CD14-positive monocyte (primary cell): ENCODE measurements at regions of chr9 and their contacts with region 1.

Region 1: GRCh38 chr9:114004221-114004716 is 73.8 kb downstream of the AMBP start:
- DNase-seq: peak in 2 of 3 donors; percentile 3 to 26
- H3K4me3 ChIP-seq: peak overlapping the region in 1 of 3 experiments; percentile 14
- H3K4me3 Mint-ChIP-seq: peak overlapping the region; percentile 35 to 85
- H3K27ac ChIP-seq: no peak overlapping the region
- H3K27ac Mint-ChIP-seq: peak overlapping the region in 4 of 7 donors; percentile 6 to 67 (median 50)
- H3K4me1 ChIP-seq: peaks cover 10 to 11% of the 10 kb centered on the region in 2 donors
- H3K4me1 Mint-ChIP-seq: peaks cover 22% of the 10 kb centered on the region
- H3K27me3 ChIP-seq: no peaks in the 10 kb centered on the region
- H3K27me3 Mint-ChIP-seq: peaks cover 5 to 8% (median 6%) of the 10 kb centered on the region in 3 donors
- CTCF ChIP-seq: no peak

Region 2: DNA sequence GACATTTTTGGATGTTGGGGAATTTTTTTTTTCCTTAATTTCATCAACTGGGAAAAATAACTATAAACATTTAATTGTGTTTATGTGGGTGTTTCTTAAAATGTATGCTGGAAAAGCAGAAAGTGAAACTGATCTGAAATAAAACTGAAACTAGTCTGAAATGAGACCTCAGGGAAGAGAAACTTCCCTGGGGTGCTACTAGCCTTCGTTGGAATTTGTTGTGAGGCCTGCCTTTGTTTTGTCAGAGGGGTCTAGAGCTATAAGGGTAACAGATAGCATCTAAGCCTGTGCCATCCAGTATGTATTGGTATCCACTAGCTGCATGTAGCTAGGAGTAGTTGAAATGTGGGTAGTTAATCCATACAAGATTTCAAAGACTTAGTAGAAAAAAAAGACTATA is 117.8 kb before region 1 on chr9:
- intact Hi-C with region 1: no loop called
- DNase-seq: peak in 2 of 3 donors; percentile 17 to 35
- H3K4me3 ChIP-seq: peak overlapping the region; percentile 37 to 72 (median 69)
- H3K4me3 Mint-ChIP-seq: peak overlapping the region; percentile 61 to 87
- H3K27ac ChIP-seq: peak overlapping the region in 1 of 2 donors; percentile 76
- H3K27ac Mint-ChIP-seq: peak overlapping the region in 5 of 7 donors; percentile 55 to 80 (median 75)
- H3K4me1 ChIP-seq: peaks cover 24 to 26% of the 10 kb centered on the region in 2 donors
- H3K4me1 Mint-ChIP-seq: peaks cover 34% of the 10 kb centered on the region
- H3K27me3 ChIP-seq: no peaks in the 10 kb centered on the region
- H3K27me3 Mint-ChIP-seq: peaks cover 0 to 2% (median 0%) of the 10 kb centered on the region in 3 donors
- CTCF ChIP-seq: no peak

Region 3: DNA sequence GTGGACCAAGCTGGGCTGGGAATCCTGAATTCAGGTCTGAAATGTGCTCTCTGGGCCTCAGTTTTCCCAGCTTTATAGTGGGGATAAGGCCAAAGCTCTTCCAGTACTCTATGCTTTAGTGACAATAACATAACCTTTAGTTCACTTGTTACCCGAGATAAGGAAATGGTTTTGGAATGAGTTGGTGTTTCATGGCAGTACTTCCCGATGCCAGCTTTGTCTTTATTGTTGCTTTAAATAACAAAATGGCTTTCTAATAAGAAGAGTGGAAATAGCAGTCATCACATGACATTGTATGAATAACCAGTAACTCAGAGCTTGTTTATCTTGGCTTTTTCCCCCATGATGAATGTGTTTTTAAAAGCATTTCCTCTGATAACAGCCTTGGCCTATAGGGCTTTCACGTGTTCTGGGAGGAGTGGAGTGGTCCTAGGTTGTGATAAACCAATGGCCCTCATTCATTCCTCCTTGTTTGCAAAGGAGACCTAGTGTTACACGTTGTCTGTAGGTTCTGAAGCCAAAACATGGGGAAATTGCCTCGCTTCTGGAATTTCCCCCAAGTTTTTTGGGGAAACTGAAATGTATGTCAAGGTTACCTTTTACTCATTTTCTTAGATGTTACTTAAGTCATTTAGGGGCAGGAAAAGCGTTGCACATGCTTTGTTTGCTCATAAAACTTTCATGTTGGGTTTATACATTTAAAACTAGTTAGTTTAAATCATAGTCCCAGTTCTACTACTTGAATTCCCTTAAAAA is 74.5 kb before region 1 on chr9:
- intact Hi-C with region 1: loop called in 1 of 2 experiments (anchors 10 kb)
- DNase-seq: no peak
- H3K4me3 ChIP-seq: no peak overlapping the region
- H3K4me3 Mint-ChIP-seq: no peak overlapping the region
- H3K27ac ChIP-seq: no peak overlapping the region
- H3K27ac Mint-ChIP-seq: no peak overlapping the region
- H3K4me1 ChIP-seq: no peaks in the 10 kb centered on the region
- H3K4me1 Mint-ChIP-seq: no peaks in the 10 kb centered on the region
- H3K27me3 ChIP-seq: no peaks in the 10 kb centered on the region
- H3K27me3 Mint-ChIP-seq: peaks cover 0 to 1% (median 0%) of the 10 kb centered on the region in 3 donors
- CTCF ChIP-seq: no peak

Region 4: GRCh38 chr9:114108016-114108833 is 104.0 kb after region 1 on chr9:
- intact Hi-C with region 1: no loop called
- DNase-seq: peak; percentile 6 to 25 (median 13)
- H3K4me3 ChIP-seq: no peak overlapping the region
- H3K4me3 Mint-ChIP-seq: no peak overlapping the region
- H3K27ac ChIP-seq: no peak overlapping the region
- H3K27ac Mint-ChIP-seq: peak overlapping the region in 1 of 7 donors; percentile 31
- H3K4me1 ChIP-seq: no peaks in the 10 kb centered on the region
- H3K4me1 Mint-ChIP-seq: no peaks in the 10 kb centered on the region
- H3K27me3 ChIP-seq: peaks cover 0 to 8% of the 10 kb centered on the region in 2 donors
- H3K27me3 Mint-ChIP-seq: peaks cover 9 to 30% (median 10%) of the 10 kb centered on the region in 3 donors
- CTCF ChIP-seq: peak; percentile 79

Region 5: GRCh38 chr9:114303977-114304376 is 299.7 kb after region 1 on chr9:
- intact Hi-C with region 1: no loop called
- DNase-seq: no peak
- H3K4me3 ChIP-seq: no peak overlapping the region
- H3K4me3 Mint-ChIP-seq: no peak overlapping the region
- H3K27ac ChIP-seq: no peak overlapping the region
- H3K27ac Mint-ChIP-seq: no peak overlapping the region
- H3K4me1 ChIP-seq: no peaks in the 10 kb centered on the region
- H3K4me1 Mint-ChIP-seq: peaks cover 4% of the 10 kb centered on the region
- H3K27me3 ChIP-seq: no peaks in the 10 kb centered on the region
- H3K27me3 Mint-ChIP-seq: peaks cover 3 to 8% (median 6%) of the 10 kb centered on the region in 3 donors
- CTCF ChIP-seq: no peak